Ovary (tissue), 10 donors: ENCODE measurements at regions of chr22 and their contacts with region 1.

Region 1: DNA sequence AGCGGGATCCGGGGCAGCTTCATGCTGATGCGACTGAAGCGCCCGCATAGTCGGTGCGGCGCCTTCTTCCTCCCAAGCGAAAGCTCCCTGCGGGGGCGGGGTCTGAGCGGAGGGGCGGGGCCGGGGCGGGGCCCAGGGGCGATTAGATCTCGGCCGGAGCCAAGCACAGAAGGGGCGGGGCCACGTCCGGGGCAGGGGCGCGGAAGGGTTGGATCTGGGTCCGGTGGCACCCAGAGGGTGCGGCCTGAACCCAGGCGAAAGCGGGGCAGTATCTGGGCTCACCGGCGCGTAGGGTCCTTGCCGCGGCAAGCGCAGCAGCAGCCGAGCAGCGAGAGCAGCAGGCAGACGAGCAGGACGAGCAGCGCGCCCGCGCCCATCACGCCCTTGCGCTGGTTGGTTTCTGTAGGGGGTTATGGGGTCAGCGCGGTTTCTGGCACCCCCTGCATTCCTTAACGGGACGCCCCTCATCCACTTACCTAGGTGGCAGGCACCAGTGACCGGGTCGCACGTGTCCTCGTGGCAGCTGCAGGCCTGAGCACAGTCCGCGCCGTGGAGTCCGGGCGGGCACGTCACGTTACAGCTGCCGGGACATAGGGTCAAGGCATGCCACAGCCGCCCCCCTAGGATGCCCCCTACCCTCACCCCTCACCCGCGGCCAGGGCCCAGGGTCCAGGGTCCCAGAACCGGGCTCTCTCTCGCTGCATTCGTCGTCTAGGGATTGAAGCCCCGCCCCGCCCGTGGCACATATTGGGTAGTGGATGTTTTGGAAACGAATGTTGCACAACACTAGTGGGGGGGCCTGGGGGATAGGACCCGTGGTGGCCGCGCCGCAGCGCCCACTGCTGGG is 8.1 kb downstream of the SCARF2 start:
- DNase-seq: peak in 2 of 5 donors; percentile 22 to 40
- H3K4me3 ChIP-seq: no peak overlapping the region
- H3K27ac ChIP-seq: no peak overlapping the region
- H3K4me1 ChIP-seq: no peaks in the 10 kb centered on the region
- H3K27me3 ChIP-seq: no peaks in the 10 kb centered on the region
- CTCF ChIP-seq: no peak
- EP300 ChIP-seq: no peak
- POLR2A ChIP-seq: no peak

Region 2: GRCh38 chr22:20319745-20320658 is 109.5 kb before region 1 on chr22 and contains the start of gene DGCR6L:
- intact Hi-C with region 1: no loop called
- DNase-seq: peak; percentile 95 to 97 (median 96)
- H3K4me3 ChIP-seq: peak within 1 kb of the TSS; percentile 74
- H3K27ac ChIP-seq: peak within 1 kb of the TSS; percentile 66 to 83
- H3K4me1 ChIP-seq: peaks cover 10% of the 10 kb centered on the region
- H3K27me3 ChIP-seq: no peaks in the 10 kb centered on the region
- CTCF ChIP-seq: no peak
- EP300 ChIP-seq: no peak
- POLR2A ChIP-seq: peak; percentile 44
- total RNA-seq, gene DGCR6L: 36.4 to 69.5 (median 40.8) TPM

Region 3: DNA sequence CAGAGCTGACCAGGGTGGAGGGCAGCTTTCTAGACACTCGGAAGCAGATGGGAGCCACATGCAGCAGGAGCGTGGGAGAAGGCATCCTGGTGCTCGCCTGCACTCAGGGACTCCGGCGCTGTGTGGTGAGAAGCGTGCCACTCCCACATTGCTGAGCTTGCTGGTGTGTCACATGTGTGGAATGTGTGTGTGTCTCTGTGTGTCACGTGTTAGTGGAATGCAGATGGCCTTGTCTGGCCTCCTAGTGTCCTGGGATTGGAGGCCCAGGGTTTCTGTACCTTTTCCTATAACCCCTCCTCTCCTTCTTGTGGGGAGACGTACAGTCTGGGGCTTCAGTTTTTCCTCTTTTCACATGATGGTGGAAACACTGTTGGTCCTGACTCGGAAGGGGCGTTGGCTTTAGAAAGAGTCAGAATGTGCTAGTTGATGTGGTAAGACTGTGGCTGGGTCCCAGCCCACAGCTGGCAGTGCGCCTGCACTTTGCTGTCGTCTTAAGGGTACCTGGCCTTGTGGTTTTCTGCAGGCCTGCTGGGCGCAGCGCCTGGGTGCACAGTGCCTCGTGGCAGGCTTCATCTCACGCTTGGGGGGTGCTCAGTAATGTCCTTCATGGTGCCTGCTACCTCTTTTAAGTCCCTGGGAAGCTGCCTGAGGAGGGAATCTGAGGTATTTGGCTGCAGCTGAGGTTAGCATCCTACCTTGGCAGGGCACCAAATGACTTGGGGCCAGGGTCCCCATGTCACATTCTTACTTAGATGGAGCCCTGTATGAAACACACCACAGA is 139.7 kb after region 1 on chr22:
- intact Hi-C with region 1: loop called in 1 of 4 experiments (anchors 10 kb)
- DNase-seq: peak in 4 of 5 donors; percentile 57 to 77 (median 64)
- H3K4me3 ChIP-seq: no peak overlapping the region
- H3K27ac ChIP-seq: peak overlapping the region in 1 of 2 donors; percentile 25
- H3K4me1 ChIP-seq: peaks cover 19% of the 10 kb centered on the region
- H3K27me3 ChIP-seq: no peaks in the 10 kb centered on the region
- CTCF ChIP-seq: no peak
- EP300 ChIP-seq: no peak
- POLR2A ChIP-seq: no peak